T-cell (primary cell): ENCODE measurements at regions of chr2 and their contacts with region 1.

Region 1: DNA sequence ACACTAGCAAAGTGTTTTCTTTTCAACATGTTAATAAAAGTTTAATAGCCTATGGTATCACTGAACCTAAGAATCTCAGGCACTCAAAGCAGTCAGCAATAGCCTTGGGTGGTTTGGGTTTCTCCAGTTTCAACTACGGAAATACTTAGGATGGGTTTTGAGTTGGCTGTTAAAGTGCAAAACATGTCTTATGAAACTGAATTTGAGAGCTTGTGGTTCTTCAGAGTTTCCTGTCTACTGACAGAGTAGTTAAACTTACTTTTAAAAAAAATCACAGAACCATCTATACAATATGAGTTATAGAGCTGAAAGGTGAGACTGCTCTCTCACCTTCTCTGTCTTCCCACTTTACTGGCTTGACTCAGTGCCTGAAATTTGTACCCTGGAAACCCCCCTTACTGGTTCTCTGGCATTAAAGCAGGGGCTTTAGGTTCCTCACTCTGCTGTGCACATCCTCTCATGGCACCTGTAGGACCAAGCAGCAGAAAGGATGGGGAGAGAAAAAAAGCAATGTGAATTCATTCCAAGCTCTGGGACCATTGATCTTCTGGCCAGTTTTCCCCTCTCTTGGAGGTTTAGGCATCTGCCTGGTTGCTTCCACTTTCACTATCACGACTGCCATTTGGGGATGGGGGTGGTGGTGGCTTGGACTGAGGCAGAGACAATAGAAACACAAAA is 18.1 kb downstream of the CCDC141 start:
- DNase-seq: peak in 17 of 35 experiments; percentile 0 to 63 (median 9)
- ATAC-seq: peak; percentile 88 to 94 (median 93)
- H3K4me3 ChIP-seq: peak overlapping the region; percentile 35 to 39
- H3K4me3 Mint-ChIP-seq: peak overlapping the region; percentile 67 to 75 (median 68)
- H3K27ac ChIP-seq: peak overlapping the region; percentile 89
- H3K27ac Mint-ChIP-seq: peak overlapping the region; percentile 98 to 99
- H3K4me1 ChIP-seq: peaks cover 7 to 28% of the 10 kb centered on the region in 2 experiments
- H3K4me1 Mint-ChIP-seq: peaks cover 19 to 40% (median 27%) of the 10 kb centered on the region in 3 donors
- H3K27me3 ChIP-seq: no peaks in the 10 kb centered on the region
- H3K27me3 Mint-ChIP-seq: no peaks in the 10 kb centered on the region

Region 2: DNA sequence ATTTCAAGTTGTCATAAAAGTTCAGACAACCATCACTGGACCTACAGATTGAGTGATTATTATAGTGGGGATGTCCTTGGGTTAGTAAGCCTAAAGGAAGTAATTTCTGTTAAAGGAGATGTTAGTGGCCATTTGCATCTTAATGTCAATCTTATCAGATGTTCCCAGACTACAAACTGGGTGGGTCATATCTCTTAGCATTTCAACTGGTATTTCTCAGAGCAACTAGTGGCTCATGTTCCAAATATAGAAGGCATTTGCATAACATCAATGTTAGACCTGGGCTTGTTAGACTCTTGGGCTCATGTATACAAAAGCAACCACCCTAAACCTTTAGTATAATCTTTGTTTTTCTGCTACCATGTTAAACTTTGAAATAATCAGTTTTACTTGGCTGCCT is 533.7 kb before region 1 on chr2:
- CTCF ChIA-PET with region 1: no interaction called
- POLR2A ChIA-PET with region 1: no interaction called
- DNase-seq: no peak
- ATAC-seq: no peak
- H3K4me3 ChIP-seq: no peak overlapping the region
- H3K4me3 Mint-ChIP-seq: no peak overlapping the region
- H3K27ac ChIP-seq: no peak overlapping the region
- H3K27ac Mint-ChIP-seq: peak overlapping the region in 1 of 2 donors; percentile 28
- H3K4me1 ChIP-seq: no peaks in the 10 kb centered on the region
- H3K4me1 Mint-ChIP-seq: no peaks in the 10 kb centered on the region
- H3K27me3 ChIP-seq: no peaks in the 10 kb centered on the region
- H3K27me3 Mint-ChIP-seq: no peaks in the 10 kb centered on the region

Region 3: DNA sequence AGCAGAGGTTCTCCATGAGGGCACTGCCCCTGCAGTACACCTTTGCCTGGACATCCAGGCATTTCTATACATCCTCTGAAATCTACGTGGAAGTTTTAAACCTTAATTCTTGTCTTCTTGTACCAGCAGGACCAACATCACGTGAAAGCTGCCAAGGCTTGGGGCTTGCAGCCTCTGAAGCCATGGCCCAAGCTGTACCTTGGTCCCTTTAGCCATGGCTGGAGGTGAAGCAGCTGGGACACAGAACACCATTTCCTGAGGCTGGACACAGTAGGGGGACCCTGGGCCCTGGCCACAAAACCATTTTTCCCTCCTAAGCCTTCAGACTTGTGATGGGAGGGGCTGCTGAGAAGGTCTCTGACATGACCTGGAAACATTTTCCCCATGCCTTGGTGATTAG is 50.8 kb after region 1 on chr2:
- CTCF ChIA-PET with region 1: no interaction called
- POLR2A ChIA-PET with region 1: interaction called in 1 of 2 experiments, 19 read pairs
- DNase-seq: no peak
- ATAC-seq: no peak
- H3K4me3 ChIP-seq: no peak overlapping the region
- H3K4me3 Mint-ChIP-seq: no peak overlapping the region
- H3K27ac ChIP-seq: no peak overlapping the region
- H3K27ac Mint-ChIP-seq: no peak overlapping the region
- H3K4me1 ChIP-seq: no peaks in the 10 kb centered on the region
- H3K4me1 Mint-ChIP-seq: peaks cover 0 to 6% (median 3%) of the 10 kb centered on the region in 3 donors
- H3K27me3 ChIP-seq: no peaks in the 10 kb centered on the region
- H3K27me3 Mint-ChIP-seq: no peaks in the 10 kb centered on the region